Mucosa of descending colon (tissue), 3 donors: ENCODE measurements at regions of chr5 and their contacts with region 1.

Region 1: DNA sequence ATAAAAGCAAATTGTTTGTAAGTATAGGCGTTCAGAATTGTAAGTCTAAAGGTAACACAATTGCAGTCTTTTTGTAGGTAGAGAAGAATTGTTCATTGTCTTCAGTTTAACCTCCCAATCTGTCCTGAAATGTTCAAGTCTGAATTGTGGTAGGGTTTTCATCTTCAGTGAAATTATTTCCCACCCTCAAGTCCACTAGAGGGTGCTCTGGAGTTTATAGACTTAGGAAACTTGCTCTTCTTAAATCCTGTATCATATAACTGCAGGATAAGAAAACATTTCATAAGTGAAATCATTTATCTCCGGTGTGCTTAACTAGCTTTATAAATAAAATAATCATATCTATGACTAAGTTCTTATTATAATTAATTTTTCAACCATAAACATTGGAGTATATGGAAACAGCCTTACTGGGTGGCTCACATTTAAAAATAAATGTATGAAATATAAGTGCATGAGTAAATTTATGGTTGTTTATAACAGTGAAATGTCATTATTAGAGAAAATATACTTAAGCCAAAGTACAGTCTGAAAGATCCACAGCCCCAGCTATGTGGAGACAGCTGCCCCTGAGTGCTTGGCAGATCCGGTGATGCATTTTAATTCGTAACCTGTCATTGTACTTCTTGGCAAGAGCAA is 182.4 kb upstream of the OTULINL start:
- DNase-seq: peak in 1 of 3 donors; percentile 73
- ATAC-seq: peak; percentile 64
- H3K4me3 ChIP-seq: no peak overlapping the region
- H3K4me1 ChIP-seq: no peaks in the 10 kb centered on the region
- CTCF ChIP-seq: peak; percentile 46

Region 2: GRCh38 chr5:14218897-14219580 is 180.1 kb before region 1 on chr5:
- intact Hi-C with region 1: no loop called
- DNase-seq: peak in 1 of 3 donors; percentile 26
- ATAC-seq: peak; percentile 8
- H3K4me3 ChIP-seq: no peak overlapping the region
- H3K4me1 ChIP-seq: peaks cover 68% of the 10 kb centered on the region
- CTCF ChIP-seq: no peak

Region 3: GRCh38 chr5:14644623-14645237 is 245.6 kb after region 1 on chr5:
- intact Hi-C with region 1: loop called in 1 of 2 experiments (anchors 2 kb)
- DNase-seq: no peak
- ATAC-seq: no peak
- H3K4me3 ChIP-seq: no peak overlapping the region
- H3K4me1 ChIP-seq: no peaks in the 10 kb centered on the region
- CTCF ChIP-seq: no peak